Heart right ventricle (tissue), 16 donors: ENCODE measurements at regions of chr6 and their contacts with region 1.

Region 1: DNA sequence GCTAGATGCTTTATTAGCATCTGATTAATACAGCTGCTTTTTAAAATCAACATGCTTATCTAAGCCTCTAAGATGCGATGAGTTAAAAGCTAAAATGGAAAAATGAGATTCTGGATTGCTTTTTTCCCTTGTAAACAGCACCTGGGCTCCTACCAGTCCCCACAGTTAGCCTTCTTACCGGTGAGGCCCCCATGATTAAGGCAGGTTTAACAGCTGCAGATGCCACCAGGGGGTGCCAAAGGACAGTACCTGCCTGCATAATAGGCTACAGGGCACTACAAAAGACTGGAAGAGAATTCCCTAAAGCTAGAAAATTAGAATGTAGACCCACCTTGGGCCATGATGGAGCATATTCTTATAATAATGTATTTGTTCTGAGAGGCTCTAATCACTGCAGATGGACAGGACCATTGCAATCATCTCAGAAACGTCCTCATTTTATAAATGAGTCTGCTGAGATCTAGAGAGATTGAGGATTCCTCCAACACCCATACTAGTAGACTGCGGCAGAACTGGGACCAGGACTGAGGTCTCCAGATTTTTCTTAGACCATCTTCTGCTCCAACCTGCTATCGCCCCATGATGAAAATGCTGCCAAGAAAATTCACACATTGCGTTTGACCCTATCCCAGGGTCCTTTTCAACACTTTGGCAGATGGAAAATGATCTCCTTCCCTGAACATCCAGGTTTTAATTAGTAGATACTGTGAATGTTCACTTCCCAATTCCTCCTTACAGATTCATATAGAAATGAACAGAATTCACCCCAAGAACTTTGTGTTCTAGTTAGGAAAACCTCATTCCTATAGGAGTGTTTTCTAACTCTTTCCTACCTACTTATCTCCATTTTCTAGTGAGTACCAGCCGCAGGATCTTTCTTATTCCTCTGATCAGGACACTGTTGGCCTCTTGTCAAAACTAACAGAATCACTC is 148.8 kb downstream of the RPS12 start:
- DNase-seq: peak; percentile 56 to 62
- ATAC-seq: peak in 7 of 8 donors; percentile 49 to 91 (median 86)
- H3K4me3 ChIP-seq: no peak overlapping the region
- H3K27ac ChIP-seq: peak overlapping the region in 1 of 10 donors; percentile 2
- H3K4me1 ChIP-seq: peaks cover 0 to 26% (median 10%) of the 10 kb centered on the region in 9 donors
- H3K27me3 ChIP-seq: no peaks in the 10 kb centered on the region
- CTCF ChIP-seq: peak; percentile 38 to 74 (median 64)

Region 2: GRCh38 chr6:132919045-132919860 is 43.9 kb before region 1 on chr6:
- intact Hi-C with region 1: loop called in 1 of 10 experiments (anchors 1 kb)
- DNase-seq: peak; percentile 53 to 60
- ATAC-seq: peak; percentile 82 to 98 (median 88)
- H3K4me3 ChIP-seq: peak overlapping the region in 5 of 10 donors; percentile 2 to 38 (median 8)
- H3K27ac ChIP-seq: peak overlapping the region in 5 of 10 donors; percentile 12 to 61 (median 31)
- H3K4me1 ChIP-seq: peaks cover 0 to 15% (median 12%) of the 10 kb centered on the region in 9 donors
- H3K27me3 ChIP-seq: no peaks in the 10 kb centered on the region
- CTCF ChIP-seq: no peak

Region 3: DNA sequence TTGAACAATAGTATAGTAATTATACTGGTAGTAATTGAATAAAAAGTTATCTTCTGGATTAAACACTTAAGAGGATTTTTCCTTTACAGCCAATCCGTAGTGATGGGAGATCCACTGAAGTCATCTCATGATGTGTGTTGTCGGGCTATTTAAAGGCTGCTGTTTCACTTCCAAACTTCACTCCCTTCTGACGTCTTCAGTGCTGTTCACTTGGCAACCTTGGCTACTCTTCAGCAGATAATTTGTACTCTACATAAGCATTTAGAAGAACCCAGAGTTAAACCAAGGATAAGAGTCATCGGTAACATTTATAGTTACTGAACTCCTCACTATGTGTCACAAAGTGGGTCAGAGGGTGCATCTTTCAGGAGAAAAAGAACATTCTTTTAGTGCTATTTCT is 98.9 kb after region 1 on chr6:
- intact Hi-C with region 1: loop called in 1 of 10 experiments (anchors 5 kb)
- DNase-seq: peak in 1 of 2 donors; percentile 60
- ATAC-seq: peak; percentile 79 to 98 (median 96)
- H3K4me3 ChIP-seq: no peak overlapping the region
- H3K27ac ChIP-seq: peak overlapping the region in 9 of 10 donors; percentile 13 to 78 (median 62)
- H3K4me1 ChIP-seq: peaks cover 0 to 12% (median 0%) of the 10 kb centered on the region in 9 donors
- H3K27me3 ChIP-seq: no peaks in the 10 kb centered on the region
- CTCF ChIP-seq: no peak

Region 4: GRCh38 chr6:133160536-133160935 is 197.3 kb after region 1 on chr6:
- intact Hi-C with region 1: loop called in 1 of 10 experiments (anchors 10 kb)
- DNase-seq: no peak
- ATAC-seq: no peak
- H3K4me3 ChIP-seq: no peak overlapping the region
- H3K27ac ChIP-seq: no peak overlapping the region
- H3K4me1 ChIP-seq: no peaks in the 10 kb centered on the region
- H3K27me3 ChIP-seq: no peaks in the 10 kb centered on the region
- CTCF ChIP-seq: no peak

Region 5: GRCh38 chr6:133184798-133185372 is 221.7 kb after region 1 on chr6:
- intact Hi-C with region 1: loop called in 2 of 10 experiments (anchors 10 kb)
- DNase-seq: no peak
- ATAC-seq: no peak
- H3K4me3 ChIP-seq: no peak overlapping the region
- H3K27ac ChIP-seq: no peak overlapping the region
- H3K4me1 ChIP-seq: no peaks in the 10 kb centered on the region
- H3K27me3 ChIP-seq: no peaks in the 10 kb centered on the region
- CTCF ChIP-seq: peak; percentile 7 to 70 (median 57)

Region 6: DNA sequence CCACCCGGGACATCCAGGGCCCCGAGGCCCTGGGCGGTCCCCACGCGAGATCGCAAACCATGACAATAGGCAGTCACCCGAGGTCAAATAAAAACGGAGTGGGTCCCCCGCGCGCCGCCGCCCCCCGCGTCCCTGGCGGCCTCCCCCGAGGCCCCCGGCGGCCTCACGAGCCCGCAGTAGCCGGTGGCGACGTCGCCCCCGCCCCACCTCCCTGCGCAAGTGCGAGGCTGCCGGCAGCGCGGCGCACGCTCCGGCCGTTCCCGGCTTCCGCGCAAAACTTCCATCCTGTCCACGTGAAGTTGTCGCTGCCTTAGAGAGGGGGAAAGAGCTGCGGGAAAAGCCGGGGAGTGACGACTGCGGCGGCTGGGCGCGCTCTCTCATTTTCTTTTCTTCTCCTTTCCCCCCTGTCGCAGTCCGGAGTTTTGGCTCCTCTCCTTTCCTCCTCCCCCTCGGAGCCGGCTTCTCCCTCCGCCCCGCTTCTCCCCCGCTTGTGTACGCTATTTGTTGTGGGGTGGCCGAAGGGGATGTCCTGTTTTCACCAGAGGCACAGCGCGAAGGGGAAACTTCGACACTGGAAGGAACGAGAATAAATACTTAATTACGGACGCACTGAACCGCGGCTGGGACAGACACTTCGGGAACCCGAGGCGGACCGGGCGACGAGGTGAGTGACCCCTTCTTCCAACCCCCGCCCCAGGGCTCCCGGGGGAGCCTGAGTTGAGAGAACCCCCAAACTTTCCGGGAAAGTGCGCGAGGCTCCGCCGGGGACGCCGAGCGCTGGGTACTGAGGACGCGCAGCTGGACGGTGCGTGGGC is 278.1 kb after region 1 on chr6 and contains the start of gene EYA4:
- intact Hi-C with region 1: loop called in 1 of 10 experiments (anchors 10 kb)
- DNase-seq: peak; percentile 27 to 50
- ATAC-seq: peak; percentile 64 to 88 (median 71)
- H3K4me3 ChIP-seq: peak within 1 kb of the TSS; percentile 24 to 73 (median 62)
- H3K27ac ChIP-seq: peak within 1 kb of the TSS; percentile 66 to 93 (median 86)
- H3K4me1 ChIP-seq: peaks cover 0 to 19% (median 3%) of the 10 kb centered on the region in 9 donors
- H3K27me3 ChIP-seq: peaks cover 0 to 66% (median 54%) of the 10 kb centered on the region in 7 donors
- CTCF ChIP-seq: peak in 2 of 9 donors; percentile 7 to 26
- total RNA-seq, gene EYA4: 10.6 to 30.2 (median 19.6) TPM

Region 7: GRCh38 chr6:133512410-133513016 is 549.3 kb after region 1 on chr6:
- intact Hi-C with region 1: loop called in 6 of 10 experiments (anchors 5 to 10 kb)
- DNase-seq: peak; percentile 21
- ATAC-seq: no peak
- H3K4me3 ChIP-seq: no peak overlapping the region
- H3K27ac ChIP-seq: no peak overlapping the region
- H3K4me1 ChIP-seq: no peaks in the 10 kb centered on the region
- H3K27me3 ChIP-seq: no peaks in the 10 kb centered on the region
- CTCF ChIP-seq: peak; percentile 20 to 71 (median 58)